A673 (cell line): ENCODE measurements at regions of chr7 and their contacts with region 1.

Region 1: DNA sequence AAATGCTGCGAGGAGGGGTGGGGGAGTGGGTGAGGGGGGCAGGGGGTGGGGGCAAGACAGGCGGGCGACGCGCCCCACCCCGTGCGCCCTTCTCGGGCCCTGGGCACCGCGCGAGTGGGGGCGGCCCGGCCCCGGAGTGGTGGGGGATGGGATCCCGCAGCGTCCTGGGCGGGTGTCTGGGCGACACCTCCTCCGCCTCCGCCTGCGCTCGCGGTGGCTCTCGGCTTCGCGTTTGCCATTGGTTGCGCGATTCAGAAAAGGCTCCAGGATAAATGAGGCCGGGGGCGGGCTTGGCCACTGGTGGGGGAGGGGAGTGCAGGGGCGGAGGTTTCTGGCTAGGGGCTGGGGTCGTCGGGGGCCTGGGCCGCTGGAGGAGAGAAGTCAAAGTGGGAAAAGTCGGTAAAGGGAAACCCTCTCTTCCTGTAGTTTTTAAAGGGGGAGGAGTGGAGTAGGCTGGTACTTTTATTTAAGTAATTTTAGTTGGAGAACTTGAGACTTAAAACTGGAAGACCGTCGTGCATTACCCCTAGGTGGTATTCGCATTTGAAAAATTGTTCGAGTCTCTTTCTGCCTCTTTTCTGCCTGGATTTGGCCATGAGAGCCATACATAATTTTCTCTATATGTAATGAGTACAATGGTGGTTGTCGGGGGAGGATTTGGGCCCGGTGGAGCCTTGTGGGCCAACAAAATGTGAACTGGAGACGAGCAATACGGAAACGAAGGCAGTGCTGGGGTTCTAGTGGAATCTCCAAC is 992 bp upstream of the IGF2BP3 start:
- DNase-seq: peak; percentile 96
- H3K4me3 ChIP-seq: peak overlapping the region; percentile 91
- H3K27ac ChIP-seq: peak overlapping the region; percentile 97
- H3K4me1 ChIP-seq: peaks cover 10% of the 10 kb centered on the region
- H3K27me3 ChIP-seq: peaks cover 14% of the 10 kb centered on the region
- CTCF ChIP-seq: no peak

Region 2: DNA sequence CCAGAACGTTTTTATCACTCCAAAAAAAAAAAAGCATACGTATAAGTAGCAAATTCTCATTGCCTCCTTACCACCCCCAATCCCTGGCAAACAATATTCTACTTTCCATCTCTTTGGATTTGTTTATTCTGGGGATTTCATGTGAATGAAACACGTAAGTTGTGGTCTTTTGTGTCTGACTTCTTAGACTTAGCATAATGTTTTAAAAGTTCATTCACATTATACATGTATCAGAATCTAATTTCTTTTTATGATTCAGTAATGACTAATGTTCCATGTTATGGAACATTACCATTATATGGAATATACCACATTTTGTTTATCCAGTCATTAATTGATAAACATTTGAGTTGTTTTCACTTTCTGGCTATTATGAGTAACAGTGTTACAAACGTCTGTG is 378.2 kb before region 1 on chr7:
- CTCF ChIA-PET with region 1: no interaction called
- POLR2A ChIA-PET with region 1: no interaction called
- intact Hi-C with region 1: no loop called
- DNase-seq: no peak
- H3K4me3 ChIP-seq: no peak overlapping the region
- H3K27ac ChIP-seq: no peak overlapping the region
- H3K4me1 ChIP-seq: no peaks in the 10 kb centered on the region
- H3K27me3 ChIP-seq: no peaks in the 10 kb centered on the region
- CTCF ChIP-seq: no peak

Region 3: GRCh38 chr7:23531794-23532489 is 60.7 kb after region 1 on chr7 and contains the start of gene TRA2A:
- CTCF ChIA-PET with region 1: no interaction called
- POLR2A ChIA-PET with region 1: no interaction called
- intact Hi-C with region 1: loop called (anchors 2 kb)
- DNase-seq: peak; percentile 97
- H3K4me3 ChIP-seq: peak within 1 kb of the TSS; percentile 80
- H3K27ac ChIP-seq: peak within 1 kb of the TSS; percentile 99
- H3K4me1 ChIP-seq: peaks cover 31% of the 10 kb centered on the region
- H3K27me3 ChIP-seq: no peaks in the 10 kb centered on the region
- CTCF ChIP-seq: no peak
- total RNA-seq, gene TRA2A: 114 and 116 TPM in 2 replicates

Region 4: GRCh38 chr7:23743226-23743625 is 271.9 kb after region 1 on chr7:
- CTCF ChIA-PET with region 1: no interaction called
- POLR2A ChIA-PET with region 1: no interaction called
- intact Hi-C with region 1: no loop called
- DNase-seq: no peak
- H3K4me3 ChIP-seq: no peak overlapping the region
- H3K27ac ChIP-seq: no peak overlapping the region
- H3K4me1 ChIP-seq: no peaks in the 10 kb centered on the region
- H3K27me3 ChIP-seq: no peaks in the 10 kb centered on the region
- CTCF ChIP-seq: no peak

Region 5: GRCh38 chr7:23787272-23787671 is 316.0 kb after region 1 on chr7:
- CTCF ChIA-PET with region 1: no interaction called
- POLR2A ChIA-PET with region 1: no interaction called
- intact Hi-C with region 1: no loop called
- DNase-seq: no peak
- H3K4me3 ChIP-seq: no peak overlapping the region
- H3K27ac ChIP-seq: no peak overlapping the region
- H3K4me1 ChIP-seq: no peaks in the 10 kb centered on the region
- H3K27me3 ChIP-seq: no peaks in the 10 kb centered on the region
- CTCF ChIP-seq: no peak